ENCODE measurements at regions of chr17 and their contacts with region 1.

Region 1: DNA sequence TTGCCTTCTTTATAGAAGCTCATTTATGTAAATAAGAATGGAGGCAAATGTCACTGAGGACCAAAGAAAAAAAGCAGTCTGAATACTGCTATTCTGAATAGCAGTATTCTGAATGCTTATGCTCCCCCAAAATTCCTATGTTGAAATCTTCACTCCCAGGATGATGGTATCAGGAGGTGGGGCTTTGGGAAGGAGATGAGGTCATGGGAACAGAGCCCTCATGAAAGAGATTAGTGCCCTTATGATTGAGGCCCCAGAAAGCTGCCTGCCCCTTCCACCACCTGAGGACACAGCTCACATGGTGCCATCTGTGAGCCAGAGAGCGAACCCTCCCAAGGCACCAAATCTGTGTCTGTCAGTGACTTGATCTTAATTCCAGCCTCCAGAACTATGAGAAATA is 28.8 kb downstream of the HEATR6 start:
- DNase-seq: no peak
- ATAC-seq: no peak
- H3K4me3 ChIP-seq: no peak overlapping the region
- H3K27ac ChIP-seq: no peak overlapping the region
- H3K4me1 ChIP-seq: no peaks in the 10 kb centered on the region
- H3K27me3 ChIP-seq: no peaks in the 10 kb centered on the region
- CTCF ChIP-seq: no peak
- POLR2A ChIP-seq: no peak

Region 2: GRCh38 chr17:59901604-59902003 is 148.3 kb before region 1 on chr17:
- intact Hi-C with region 1: loop called in 1 of 2 experiments (anchors 10 kb)
- DNase-seq: no peak
- ATAC-seq: no peak
- H3K4me3 ChIP-seq: no peak overlapping the region
- H3K27ac ChIP-seq: no peak overlapping the region
- H3K4me1 ChIP-seq: no peaks in the 10 kb centered on the region
- H3K27me3 ChIP-seq: no peaks in the 10 kb centered on the region
- CTCF ChIP-seq: no peak
- POLR2A ChIP-seq: no peak

Measured in right lobe of liver (tissue), 6 donors.